GM12878 (cell line): ENCODE measurements at regions of chr5 and their contacts with region 1.

Region 1: DNA sequence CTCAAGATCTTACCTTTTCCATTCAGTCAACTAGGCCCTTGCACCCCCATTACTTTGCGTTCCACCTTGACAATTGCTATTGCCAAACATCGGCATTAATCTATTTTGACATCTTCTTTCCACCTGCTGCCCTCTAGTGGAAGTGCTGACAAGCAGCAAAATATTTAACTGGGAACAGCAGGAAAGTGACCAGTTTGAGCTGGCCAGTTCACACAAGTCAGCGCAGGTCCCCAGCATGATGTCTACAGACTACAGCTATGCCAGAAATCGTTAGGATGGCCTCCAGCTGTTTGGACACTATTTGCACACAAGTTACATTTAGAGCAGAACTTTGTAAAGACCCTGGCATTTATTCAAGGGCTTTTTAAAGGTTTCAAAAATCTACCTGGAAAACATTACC is 160.1 kb downstream of the GHR start:
- DNase-seq: peak; percentile 2
- ATAC-seq: peak; percentile 74
- H3K4me3 ChIP-seq: no peak overlapping the region
- H3K27ac ChIP-seq: no peak overlapping the region
- H3K4me1 ChIP-seq: no peaks in the 10 kb centered on the region
- H3K27me3 ChIP-seq: no peaks in the 10 kb centered on the region; a peak in 1 of 4 replicates
- CTCF ChIP-seq: peak; percentile 70 to 89 (median 79)
- EP300 ChIP-seq: no peak
- POLR2A ChIP-seq: no peak
- RAD21 ChIP-seq: peak; percentile 79

Region 2: GRCh38 chr5:42005561-42006153 is 577.7 kb before region 1 on chr5:
- CTCF ChIA-PET with region 1: interaction called, 4 read pairs
- POLR2A ChIA-PET with region 1: no interaction called
- RAD21 ChIA-PET with region 1: interaction called, 3 read pairs
- SMC1A ChIA-PET with region 1: no interaction called
- in situ Hi-C with region 1: no loop called
- intact Hi-C with region 1: loop called (anchors 10 kb)
- DNase-seq: no peak
- ATAC-seq: peak; percentile 79
- H3K4me3 ChIP-seq: no peak overlapping the region
- H3K27ac ChIP-seq: no peak overlapping the region
- H3K4me1 ChIP-seq: no peaks in the 10 kb centered on the region
- H3K27me3 ChIP-seq: no peaks in the 10 kb centered on the region
- CTCF ChIP-seq: peak; percentile 48 to 72 (median 66)
- EP300 ChIP-seq: no peak
- POLR2A ChIP-seq: no peak
- RAD21 ChIP-seq: peak; percentile 55

Region 3: GRCh38 chr5:42467981-42468524 is 115.3 kb before region 1 on chr5:
- CTCF ChIA-PET with region 1: interaction called, 15 read pairs
- POLR2A ChIA-PET with region 1: no interaction called
- RAD21 ChIA-PET with region 1: interaction called, 9 read pairs
- SMC1A ChIA-PET with region 1: interaction called, 14 read pairs
- in situ Hi-C with region 1: no loop called
- intact Hi-C with region 1: no loop called
- DNase-seq: no peak
- ATAC-seq: peak; percentile 51
- H3K4me3 ChIP-seq: no peak overlapping the region
- H3K27ac ChIP-seq: no peak overlapping the region
- H3K4me1 ChIP-seq: no peaks in the 10 kb centered on the region
- H3K27me3 ChIP-seq: no peaks in the 10 kb centered on the region
- CTCF ChIP-seq: no peak
- EP300 ChIP-seq: no peak
- POLR2A ChIP-seq: no peak
- RAD21 ChIP-seq: no peak

Region 4: DNA sequence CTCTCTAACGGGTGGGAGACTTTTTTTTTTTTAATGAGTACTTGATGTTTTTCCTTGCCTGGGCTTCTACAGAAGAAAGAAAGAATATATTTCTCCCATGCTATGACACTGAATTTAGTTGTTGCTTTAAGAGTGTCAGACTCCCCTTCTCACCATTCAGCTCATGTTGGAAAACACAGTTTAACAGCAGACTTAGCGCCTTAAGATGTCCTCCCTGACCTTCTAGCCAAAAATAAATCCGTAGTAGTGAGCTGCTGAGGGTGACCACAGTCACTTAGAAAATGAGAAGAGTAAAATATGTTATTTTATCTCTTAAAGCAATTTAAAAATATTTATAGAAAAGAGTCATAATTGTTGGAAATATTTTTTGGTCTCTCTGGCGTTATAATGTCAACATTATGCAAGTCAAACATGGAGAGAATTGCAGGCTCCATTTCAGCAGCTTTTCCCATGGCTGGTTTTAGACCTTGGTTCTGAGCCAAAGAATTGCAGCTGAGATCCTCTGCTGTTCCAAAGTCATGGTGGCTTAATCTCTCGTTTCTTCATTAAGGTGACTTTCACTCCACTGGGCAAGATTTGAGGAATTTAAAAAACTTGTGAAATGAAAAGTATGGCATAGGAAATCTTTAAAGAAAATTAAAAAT is 16.5 kb before region 1 on chr5:
- CTCF ChIA-PET with region 1: interaction called, 10 read pairs
- POLR2A ChIA-PET with region 1: no interaction called
- RAD21 ChIA-PET with region 1: interaction called, 3 read pairs
- SMC1A ChIA-PET with region 1: interaction called, 4 read pairs
- in situ Hi-C with region 1: no loop called
- intact Hi-C with region 1: no loop called
- DNase-seq: no peak
- ATAC-seq: no peak
- H3K4me3 ChIP-seq: no peak overlapping the region
- H3K27ac ChIP-seq: no peak overlapping the region
- H3K4me1 ChIP-seq: no peaks in the 10 kb centered on the region
- H3K27me3 ChIP-seq: no peaks in the 10 kb centered on the region
- CTCF ChIP-seq: no peak
- EP300 ChIP-seq: no peak
- POLR2A ChIP-seq: no peak
- RAD21 ChIP-seq: no peak

Region 5: DNA sequence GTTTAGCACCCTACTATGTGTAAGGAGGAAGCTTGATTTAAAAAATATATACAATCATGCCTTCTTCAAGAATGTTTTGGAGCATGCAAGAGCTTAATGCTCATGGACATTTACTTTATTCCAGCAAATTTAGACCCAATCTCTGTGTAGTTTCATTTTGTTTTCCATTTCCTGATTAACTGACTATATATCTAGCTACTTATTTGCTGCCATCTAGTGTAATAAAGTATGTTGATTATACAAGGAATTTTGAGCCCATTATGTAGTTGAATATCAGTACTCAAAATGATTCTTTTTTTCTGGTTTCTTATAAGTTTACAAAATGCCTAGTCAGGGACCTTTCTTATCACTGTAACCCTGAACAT is 73.3 kb after region 1 on chr5:
- CTCF ChIA-PET with region 1: interaction called, 4 read pairs
- POLR2A ChIA-PET with region 1: no interaction called
- RAD21 ChIA-PET with region 1: interaction called, 6 read pairs
- SMC1A ChIA-PET with region 1: interaction called, 24 read pairs
- in situ Hi-C with region 1: no loop called
- intact Hi-C with region 1: no loop called
- DNase-seq: no peak
- ATAC-seq: no peak
- H3K4me3 ChIP-seq: no peak overlapping the region
- H3K27ac ChIP-seq: no peak overlapping the region
- H3K4me1 ChIP-seq: no peaks in the 10 kb centered on the region
- H3K27me3 ChIP-seq: no peaks in the 10 kb centered on the region
- CTCF ChIP-seq: no peak
- EP300 ChIP-seq: no peak
- POLR2A ChIP-seq: no peak
- RAD21 ChIP-seq: no peak

Region 6: DNA sequence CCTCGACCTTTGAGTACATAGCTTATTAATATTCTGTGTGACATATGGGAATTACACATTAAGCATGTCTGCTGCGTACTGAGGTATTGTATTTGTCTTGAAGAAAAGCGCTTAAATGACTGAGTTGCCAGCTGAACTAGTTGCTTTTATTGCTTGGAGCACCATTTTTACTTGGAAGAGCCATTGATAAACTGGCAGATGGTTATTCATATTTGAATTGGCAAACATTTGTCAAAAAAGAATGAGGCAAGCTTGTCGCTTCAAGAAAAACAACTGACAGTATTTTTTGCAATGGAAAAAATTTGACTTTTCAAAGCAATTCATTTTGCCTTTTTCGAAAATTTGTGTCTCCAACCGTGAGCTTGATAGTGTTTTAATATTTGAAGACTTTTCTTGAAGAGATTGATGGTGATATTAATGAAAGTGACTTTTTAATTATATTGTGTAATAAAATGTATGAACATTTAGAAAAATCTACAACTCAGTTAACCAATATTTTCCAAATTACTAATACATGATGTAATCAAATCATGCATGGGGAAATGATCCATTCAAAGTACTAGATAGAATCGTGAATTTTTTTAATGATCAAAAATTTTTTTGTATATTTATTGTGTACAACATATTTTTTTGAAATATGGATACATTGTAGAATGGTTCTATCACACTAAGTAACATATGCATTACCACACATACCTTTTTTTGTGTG is 118.2 kb after region 1 on chr5:
- CTCF ChIA-PET with region 1: no interaction called
- POLR2A ChIA-PET with region 1: no interaction called
- RAD21 ChIA-PET with region 1: no interaction called
- SMC1A ChIA-PET with region 1: no interaction called
- in situ Hi-C with region 1: no loop called
- intact Hi-C with region 1: no loop called
- DNase-seq: no peak
- ATAC-seq: no peak
- H3K4me3 ChIP-seq: no peak overlapping the region
- H3K27ac ChIP-seq: no peak overlapping the region
- H3K4me1 ChIP-seq: no peaks in the 10 kb centered on the region
- H3K27me3 ChIP-seq: no peaks in the 10 kb centered on the region
- CTCF ChIP-seq: no peak
- EP300 ChIP-seq: no peak
- POLR2A ChIP-seq: no peak
- RAD21 ChIP-seq: no peak

Region 7: GRCh38 chr5:42889311-42889933 is 306.1 kb after region 1 on chr5:
- CTCF ChIA-PET with region 1: interaction called, 25 read pairs
- POLR2A ChIA-PET with region 1: no interaction called
- RAD21 ChIA-PET with region 1: interaction called, 3 read pairs
- SMC1A ChIA-PET with region 1: interaction called, 7 read pairs
- in situ Hi-C with region 1: no loop called
- intact Hi-C with region 1: loop called (anchors 5 kb)
- DNase-seq: no peak
- ATAC-seq: peak; percentile 97; the same call in 2 of the 3 replicates
- H3K4me3 ChIP-seq: no peak overlapping the region
- H3K27ac ChIP-seq: no peak overlapping the region
- H3K4me1 ChIP-seq: no peaks in the 10 kb centered on the region
- H3K27me3 ChIP-seq: peaks cover 0 to 2% of the 10 kb centered on the region in 2 experiments; a peak in 2 of 4 replicates
- CTCF ChIP-seq: peak; percentile 85 to 92 (median 90)
- EP300 ChIP-seq: no peak
- POLR2A ChIP-seq: no peak
- RAD21 ChIP-seq: peak; percentile 96

Region 8: GRCh38 chr5:43484106-43484849 is 901.0 kb after region 1 on chr5:
- CTCF ChIA-PET with region 1: no interaction called
- POLR2A ChIA-PET with region 1: no interaction called
- RAD21 ChIA-PET with region 1: no interaction called
- SMC1A ChIA-PET with region 1: no interaction called
- in situ Hi-C with region 1: no loop called
- intact Hi-C with region 1: no loop called
- DNase-seq: peak; percentile 60
- ATAC-seq: peak; percentile 82
- H3K4me3 ChIP-seq: peak overlapping the region; percentile 80
- H3K27ac ChIP-seq: peak overlapping the region; percentile 100
- H3K4me1 ChIP-seq: peaks cover 3% of the 10 kb centered on the region
- H3K27me3 ChIP-seq: no peaks in the 10 kb centered on the region
- CTCF ChIP-seq: peak; percentile 56 to 82 (median 69)
- EP300 ChIP-seq: 0 out of 4 replicates have a peak, but pooled peaks of 1 of the 2 experiments have one; percentile 7
- POLR2A ChIP-seq: peak; percentile 61
- RAD21 ChIP-seq: peak; percentile 58